Activated B cell treated with CpG ODN at 0.5 μM for 24 hours (primary cell): ENCODE measurements at regions of chr9 and their contacts with region 1.

Region 1: GRCh38 chr9:24127519-24127918 is 301.5 kb upstream of the ELAVL2 start:
- DNase-seq: no peak
- ATAC-seq: no peak
- H3K4me3 Mint-ChIP-seq: no peak overlapping the region
- H3K27ac Mint-ChIP-seq: no peak overlapping the region
- H3K4me1 Mint-ChIP-seq: no peaks in the 10 kb centered on the region
- H3K27me3 Mint-ChIP-seq: no peaks in the 10 kb centered on the region
- CTCF ChIP-seq: no peak

Region 2: DNA sequence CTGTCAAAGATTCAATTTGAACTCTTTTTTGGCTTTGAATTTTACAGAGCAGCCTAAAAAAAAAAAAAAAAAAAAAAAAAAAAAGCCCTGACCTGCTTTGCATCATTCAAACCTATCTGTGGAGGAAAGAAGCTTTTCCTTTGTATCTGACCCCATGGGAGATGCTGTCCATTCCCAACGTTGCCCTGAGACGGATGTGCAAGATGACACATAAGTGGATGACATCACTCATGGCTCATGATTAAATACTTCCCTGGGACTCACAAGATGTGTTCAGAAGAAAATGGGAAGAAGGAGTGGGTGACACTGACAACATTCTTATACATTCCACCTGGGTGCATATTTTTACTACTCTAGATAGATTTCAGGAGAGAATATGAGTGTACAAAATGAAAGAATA is 55.8 kb before region 1 on chr9:
- CTCF ChIA-PET with region 1: no interaction called
- POLR2A ChIA-PET with region 1: no interaction called
- intact Hi-C with region 1: loop called (anchors 5 kb)
- DNase-seq: no peak
- ATAC-seq: no peak
- H3K4me3 Mint-ChIP-seq: no peak overlapping the region
- H3K27ac Mint-ChIP-seq: no peak overlapping the region
- H3K4me1 Mint-ChIP-seq: no peaks in the 10 kb centered on the region
- H3K27me3 Mint-ChIP-seq: no peaks in the 10 kb centered on the region
- CTCF ChIP-seq: no peak